Mammary epithelial cell (primary cell): ENCODE measurements at regions of chr11 and their contacts with region 1.

Region 1: GRCh38 chr11:122137081-122137793 is 21.2 kb upstream of the BLID start:
- DNase-seq: peak; percentile 65
- H3K4me3 ChIP-seq: no peak overlapping the region
- H3K27ac ChIP-seq: peak overlapping the region; percentile 68
- H3K4me1 ChIP-seq: peaks cover 59% of the 10 kb centered on the region
- H3K27me3 ChIP-seq: no peaks in the 10 kb centered on the region
- CTCF ChIP-seq: no peak

Region 2: GRCh38 chr11:121508449-121508848 is 628.8 kb before region 1 on chr11:
- CTCF ChIA-PET with region 1: no interaction called
- dilution Hi-C with region 1: no loop called
- in situ Hi-C with region 1: no loop called
- intact Hi-C with region 1: no loop called
- DNase-seq: no peak
- H3K4me3 ChIP-seq: no peak overlapping the region
- H3K27ac ChIP-seq: no peak overlapping the region
- H3K4me1 ChIP-seq: no peaks in the 10 kb centered on the region
- H3K27me3 ChIP-seq: no peaks in the 10 kb centered on the region
- CTCF ChIP-seq: no peak

Region 3: DNA sequence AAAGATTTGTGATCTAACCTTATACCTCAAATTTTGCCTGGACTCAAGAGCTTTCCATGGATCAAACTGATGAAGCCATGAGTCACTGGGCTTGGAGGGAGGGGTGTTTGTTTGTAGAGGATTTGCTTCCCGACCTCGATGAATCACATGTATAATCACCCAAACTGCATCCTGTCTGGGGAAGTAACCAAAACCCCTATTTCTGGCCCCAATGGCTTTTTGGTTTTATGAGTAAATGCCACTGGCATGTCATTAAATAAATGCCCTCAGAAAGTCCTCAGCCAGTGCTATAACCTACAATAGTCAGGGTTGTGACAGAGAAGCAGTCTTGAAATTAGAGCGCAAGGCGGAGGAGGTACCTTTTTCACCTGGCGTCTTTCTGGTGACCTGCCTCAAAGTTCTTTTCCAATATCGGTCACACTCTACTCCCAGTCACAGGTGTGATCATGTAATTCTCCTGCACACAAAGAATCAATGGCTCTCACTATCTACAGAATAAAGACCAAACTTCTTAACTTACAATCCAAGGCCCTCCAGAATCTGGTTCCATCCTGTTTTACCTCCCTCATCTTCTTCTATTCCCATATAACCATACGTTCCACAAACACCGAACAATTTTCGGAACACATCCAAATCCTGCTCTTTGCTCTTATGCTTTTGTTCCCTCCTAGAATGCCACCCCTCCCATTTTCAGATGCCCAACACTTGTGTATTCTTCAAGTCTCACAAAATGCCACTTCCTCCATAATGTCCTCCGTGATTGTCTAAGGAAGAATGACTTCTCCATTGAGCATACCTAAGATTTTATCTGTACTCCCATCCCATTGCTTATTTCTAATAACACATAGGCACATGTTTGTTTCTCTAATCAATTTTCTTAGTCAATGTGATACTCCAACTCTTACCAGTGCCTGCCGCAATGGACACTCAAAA is 60.1 kb after region 1 on chr11:
- CTCF ChIA-PET with region 1: no interaction called
- dilution Hi-C with region 1: loop called (anchors 10 kb)
- in situ Hi-C with region 1: no loop called
- intact Hi-C with region 1: loop called (anchors 2 kb)
- DNase-seq: peak; percentile 96
- H3K4me3 ChIP-seq: peak overlapping the region in 1 of 3 experiments; percentile 10
- H3K27ac ChIP-seq: peak overlapping the region; percentile 71
- H3K4me1 ChIP-seq: peaks cover 73% of the 10 kb centered on the region
- H3K27me3 ChIP-seq: no peaks in the 10 kb centered on the region
- CTCF ChIP-seq: no peak